ENCODE measurements at regions of chr4 and their contacts with region 1.

Region 1: DNA sequence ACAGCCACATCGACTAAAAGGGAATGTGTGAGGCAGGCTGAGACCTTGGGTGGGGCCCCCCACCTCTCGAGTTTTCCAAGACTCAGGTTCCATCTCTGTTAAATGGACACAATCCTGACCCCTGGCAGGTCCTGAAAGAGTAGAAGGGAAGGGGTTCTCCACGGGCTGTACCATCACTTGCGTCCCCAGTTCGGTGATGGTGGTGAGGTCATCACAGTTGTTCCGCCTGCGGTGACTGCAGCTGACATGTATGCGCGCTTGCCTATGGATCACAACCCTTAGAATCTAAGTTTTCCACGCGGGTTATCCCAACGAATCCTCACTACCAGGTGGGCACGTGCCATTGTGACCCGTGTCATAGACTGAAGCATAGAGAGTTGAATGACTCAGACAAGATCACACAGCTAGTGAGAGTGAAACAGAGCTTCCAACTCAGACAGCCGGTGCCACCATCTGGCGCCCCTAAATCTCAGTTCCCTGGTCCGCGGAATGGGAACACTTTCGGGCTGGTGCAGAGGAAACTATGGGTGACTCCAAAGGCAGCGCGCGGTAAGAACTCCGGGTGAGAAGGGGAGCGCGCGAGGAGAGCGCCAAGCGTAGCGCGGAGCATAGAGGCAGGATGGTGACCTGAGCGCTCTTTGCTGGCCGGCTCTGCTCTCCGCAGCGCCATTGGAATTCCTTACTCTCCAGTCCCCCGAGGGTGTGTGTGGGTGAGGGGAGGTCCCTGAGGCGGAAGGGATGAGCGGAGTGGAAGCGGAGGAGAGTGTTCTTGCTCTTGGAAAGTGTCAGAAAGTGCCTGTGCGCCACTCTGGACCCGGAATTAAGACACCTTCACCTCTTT is 10.5 kb downstream of the MSX1 start:
- DNase-seq: peak; percentile 50
- ATAC-seq: no peak
- H3K4me3 ChIP-seq: no peak overlapping the region
- H3K4me3 Mint-ChIP-seq: peak overlapping the region; percentile 39
- H3K27ac ChIP-seq: no peak overlapping the region
- H3K27ac Mint-ChIP-seq: peak overlapping the region; percentile 82
- H3K4me1 ChIP-seq: peaks cover 36 to 74% of the 10 kb centered on the region in 2 donors
- H3K4me1 Mint-ChIP-seq: peaks cover 31% of the 10 kb centered on the region
- H3K27me3 ChIP-seq: peaks cover 0 to 100% (median 77%) of the 10 kb centered on the region in 4 experiments
- H3K27me3 Mint-ChIP-seq: peaks cover 71% of the 10 kb centered on the region
- CTCF ChIP-seq: no peak

Region 2: DNA sequence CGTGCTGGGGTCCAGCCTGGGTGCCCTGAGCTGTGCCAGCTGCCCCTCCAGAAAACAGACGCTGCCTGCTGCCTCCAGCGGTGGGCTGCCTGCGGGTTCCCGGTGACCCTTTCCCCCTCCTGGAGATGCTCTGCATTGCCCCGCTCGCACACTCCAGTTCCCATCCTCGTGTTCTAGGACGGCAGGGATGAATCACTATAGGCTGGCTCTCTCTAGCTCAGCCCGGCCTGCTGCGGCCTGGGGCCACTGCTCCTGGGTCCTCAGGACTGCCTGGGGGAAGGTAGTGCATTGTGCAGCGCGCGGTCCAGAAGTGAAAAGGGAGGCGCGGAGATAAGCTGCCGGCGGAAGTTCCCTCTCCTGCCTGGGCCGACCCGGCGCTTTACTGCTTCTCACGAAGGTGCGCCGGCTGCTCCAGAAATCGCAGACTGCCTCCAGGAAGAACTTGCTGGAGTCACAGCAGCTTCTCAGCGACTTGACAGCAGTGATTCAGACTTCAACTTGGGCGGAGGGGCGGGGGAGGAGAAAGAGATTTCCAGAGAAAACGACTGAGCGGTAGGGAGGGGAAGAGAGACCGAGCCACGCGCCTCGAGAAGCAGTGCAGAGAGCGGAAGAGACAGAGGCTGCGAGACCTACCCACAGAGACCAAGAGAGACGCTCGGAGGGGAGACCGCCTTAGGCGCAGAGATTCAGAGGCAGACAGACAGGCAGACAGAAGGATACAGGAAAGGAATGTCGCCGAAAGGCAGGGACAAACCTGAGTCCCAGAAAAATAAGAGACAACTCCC is 17.2 kb before region 1 on chr4:
- CTCF ChIA-PET with region 1: interaction called, 9 read pairs
- POLR2A ChIA-PET with region 1: no interaction called
- intact Hi-C with region 1: loop called (anchors 2 kb)
- DNase-seq: peak; percentile 69
- ATAC-seq: peak; percentile 65
- H3K4me3 ChIP-seq: peak overlapping the region in 4 of 5 experiments; percentile 43 to 59 (median 52)
- H3K4me3 Mint-ChIP-seq: peak overlapping the region; percentile 88
- H3K27ac ChIP-seq: no peak overlapping the region
- H3K27ac Mint-ChIP-seq: peak overlapping the region; percentile 27
- H3K4me1 ChIP-seq: peaks cover 34 to 44% of the 10 kb centered on the region in 2 donors
- H3K4me1 Mint-ChIP-seq: peaks cover 28% of the 10 kb centered on the region
- H3K27me3 ChIP-seq: peaks cover 0 to 87% (median 52%) of the 10 kb centered on the region in 4 experiments
- H3K27me3 Mint-ChIP-seq: peaks cover 53% of the 10 kb centered on the region
- CTCF ChIP-seq: no peak

Region 3: DNA sequence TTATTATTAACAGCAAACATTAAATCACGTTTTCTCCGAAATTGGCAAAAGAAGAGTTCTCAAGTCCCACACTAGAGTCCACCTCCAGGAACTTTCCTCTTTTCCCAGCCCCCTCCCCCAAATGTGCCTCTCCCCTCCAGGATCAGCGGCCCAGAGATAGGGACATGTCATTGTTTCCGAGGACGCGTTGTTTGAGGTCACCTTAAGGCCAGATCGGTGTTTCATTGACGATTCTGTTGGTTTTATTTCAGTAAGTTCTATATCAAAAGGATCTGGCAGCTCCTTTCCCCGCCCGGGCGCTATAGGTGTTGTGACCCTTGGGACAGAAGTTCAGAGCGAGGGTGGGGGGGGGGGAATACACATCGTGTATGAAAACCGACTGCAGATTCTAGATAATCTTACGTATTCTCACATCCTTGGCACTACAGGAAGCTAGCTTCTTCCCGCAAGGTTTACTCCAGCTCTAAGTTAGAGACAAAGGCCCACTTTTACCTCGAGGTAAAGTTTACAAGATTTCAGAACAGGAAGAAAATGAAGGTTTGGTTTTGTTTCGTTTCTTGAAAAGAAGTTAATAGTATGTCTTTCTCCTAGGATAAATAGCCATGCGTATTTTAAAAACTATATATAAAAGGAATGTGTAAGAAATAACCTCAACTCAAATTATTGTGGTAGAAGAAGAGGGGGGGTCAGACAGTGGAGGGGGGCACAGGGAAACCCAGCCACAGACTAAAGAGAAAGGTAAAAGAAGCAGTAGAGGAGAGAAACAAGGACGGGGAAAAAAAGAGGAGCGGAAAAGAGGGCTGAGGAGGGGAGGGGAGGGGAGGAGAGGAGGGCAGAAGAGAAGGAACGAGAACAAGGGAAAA is 11.2 kb before region 1 on chr4:
- CTCF ChIA-PET with region 1: interaction called, 9 read pairs
- POLR2A ChIA-PET with region 1: interaction called, 3 read pairs
- intact Hi-C with region 1: loop called (anchors 1 kb)
- DNase-seq: peak; percentile 41
- ATAC-seq: no peak
- H3K4me3 ChIP-seq: peak overlapping the region in 3 of 5 experiments; percentile 20 to 69 (median 28)
- H3K4me3 Mint-ChIP-seq: peak overlapping the region; percentile 75
- H3K27ac ChIP-seq: no peak overlapping the region
- H3K27ac Mint-ChIP-seq: peak overlapping the region; percentile 37
- H3K4me1 ChIP-seq: peaks cover 52 to 75% of the 10 kb centered on the region in 2 donors
- H3K4me1 Mint-ChIP-seq: peaks cover 29% of the 10 kb centered on the region
- H3K27me3 ChIP-seq: peaks cover 0 to 95% (median 77%) of the 10 kb centered on the region in 4 experiments
- H3K27me3 Mint-ChIP-seq: peaks cover 61% of the 10 kb centered on the region
- CTCF ChIP-seq: no peak

Measured in B cell (primary cell).